Ovary (tissue), 10 donors: ENCODE measurements at regions of chr18 and their contacts with region 1.

Region 1: GRCh38 chr18:53534695-53535094 is 689.8 kb downstream of the MBD2 start:
- DNase-seq: peak; percentile 12 to 36 (median 18)
- H3K4me3 ChIP-seq: no peak overlapping the region
- H3K27ac ChIP-seq: no peak overlapping the region
- H3K4me1 ChIP-seq: no peaks in the 10 kb centered on the region
- H3K27me3 ChIP-seq: no peaks in the 10 kb centered on the region
- CTCF ChIP-seq: no peak
- EP300 ChIP-seq: no peak
- POLR2A ChIP-seq: no peak

Region 2: GRCh38 chr18:53489266-53489665 is 45.4 kb before region 1 on chr18:
- intact Hi-C with region 1: loop called in 1 of 4 experiments (anchors 1 kb)
- DNase-seq: no peak
- H3K4me3 ChIP-seq: no peak overlapping the region
- H3K27ac ChIP-seq: no peak overlapping the region
- H3K4me1 ChIP-seq: no peaks in the 10 kb centered on the region
- H3K27me3 ChIP-seq: no peaks in the 10 kb centered on the region
- CTCF ChIP-seq: no peak
- EP300 ChIP-seq: no peak
- POLR2A ChIP-seq: no peak

Region 3: GRCh38 chr18:53687002-53687401 is 152.3 kb after region 1 on chr18:
- intact Hi-C with region 1: no loop called
- DNase-seq: no peak
- H3K4me3 ChIP-seq: no peak overlapping the region
- H3K27ac ChIP-seq: no peak overlapping the region
- H3K4me1 ChIP-seq: no peaks in the 10 kb centered on the region
- H3K27me3 ChIP-seq: no peaks in the 10 kb centered on the region
- CTCF ChIP-seq: no peak
- EP300 ChIP-seq: no peak
- POLR2A ChIP-seq: no peak